Right ventricle myocardium inferior (tissue), 1 donor: ENCODE measurements at regions of chr17 and their contacts with region 1.

Region 1: DNA sequence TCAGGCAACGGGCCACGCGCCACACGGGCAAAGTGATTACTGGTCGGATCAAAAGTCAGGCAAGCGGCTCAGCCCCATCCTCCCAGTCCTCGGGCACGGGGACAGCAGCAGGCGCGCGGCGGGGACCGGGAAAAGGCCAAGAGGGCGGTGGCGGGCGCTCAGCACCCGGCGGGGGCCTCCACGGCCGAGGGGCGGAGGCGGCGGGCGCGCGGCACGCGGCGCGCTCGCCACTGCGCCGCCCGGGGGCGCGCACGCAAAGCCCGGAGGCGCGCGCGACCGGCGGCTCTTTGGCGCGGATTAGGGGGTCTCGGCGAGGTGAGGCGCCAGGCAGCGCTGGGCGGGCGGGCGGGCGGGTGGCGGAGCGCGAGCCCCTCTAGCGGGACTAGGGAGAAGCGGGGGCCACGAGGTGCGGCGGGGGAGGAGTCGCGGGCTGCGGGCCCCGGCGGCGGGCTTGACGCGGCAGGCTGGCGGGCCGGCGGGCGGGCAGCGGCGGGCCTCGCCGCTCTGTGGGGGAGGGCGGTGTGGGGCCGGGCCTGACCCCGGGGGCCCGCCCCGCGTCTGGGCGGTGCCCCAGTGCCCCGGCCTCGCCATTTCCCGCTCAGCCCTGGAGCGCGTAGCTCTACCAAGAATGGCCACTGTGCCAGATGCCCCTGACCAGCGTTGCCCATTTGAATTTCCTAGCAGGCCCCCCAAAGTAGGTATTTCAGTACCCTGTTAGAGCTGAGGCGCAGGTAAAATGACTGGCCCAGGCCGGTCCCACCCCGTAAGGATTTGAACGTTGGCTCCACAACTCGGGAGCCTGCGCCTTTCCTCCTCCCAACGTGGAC is at the starts of genes ACACA and TADA2A:
- DNase-seq: peak; percentile 90
- ATAC-seq: peak; percentile 98
- total RNA-seq, gene ACACA: 13.3 TPM
- total RNA-seq, gene TADA2A: 11.3 TPM

Region 2: DNA sequence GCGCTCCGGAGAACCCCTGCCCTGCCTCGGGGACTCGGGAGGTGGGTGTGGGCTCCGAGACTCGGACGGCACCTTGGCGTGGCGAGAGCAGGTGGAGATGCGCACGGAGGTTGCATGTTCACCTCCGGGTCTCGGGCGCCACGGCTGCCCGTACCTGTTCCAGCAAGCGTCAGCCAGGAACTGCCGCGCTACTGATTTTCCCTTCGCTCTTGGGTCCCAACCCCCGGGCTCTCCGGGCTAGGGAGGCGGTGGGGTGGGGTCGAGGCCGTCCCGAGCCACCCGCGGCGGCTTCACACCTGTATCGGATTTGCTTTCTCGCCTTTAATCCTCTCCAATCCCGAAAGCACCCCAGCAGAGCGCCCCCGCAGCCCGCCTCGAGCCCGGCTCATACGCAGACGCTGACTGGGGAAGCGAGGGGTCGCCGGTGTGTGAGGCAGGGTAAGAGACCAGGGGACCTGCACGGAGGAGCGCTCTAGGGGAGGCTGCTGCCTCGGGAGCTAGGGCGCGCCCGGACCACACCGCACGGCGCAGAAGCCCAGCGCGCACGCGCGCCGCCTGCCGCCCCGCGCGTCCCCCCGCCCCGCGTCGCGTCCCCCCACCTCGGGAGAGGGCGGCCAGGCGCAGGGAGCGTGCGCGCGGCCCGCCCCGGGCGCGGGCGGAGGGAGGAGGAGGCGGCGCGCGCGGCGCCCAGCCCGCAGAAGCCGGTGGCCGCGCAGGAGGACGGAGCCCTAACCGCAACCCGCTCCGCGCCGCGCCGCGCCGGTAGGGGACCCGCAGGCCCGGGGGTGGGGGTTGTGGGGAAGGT is 82.6 kb after region 1 on chr17 and contains the start of gene DUSP14:
- intact Hi-C with region 1: loop called (anchors 5 kb)
- DNase-seq: peak; percentile 86
- ATAC-seq: peak; percentile 92
- total RNA-seq, gene DUSP14: 21.5 TPM